Esophagus squamous epithelium (tissue), 5 donors: ENCODE measurements at regions of chr4 and their contacts with region 1.

Region 1: DNA sequence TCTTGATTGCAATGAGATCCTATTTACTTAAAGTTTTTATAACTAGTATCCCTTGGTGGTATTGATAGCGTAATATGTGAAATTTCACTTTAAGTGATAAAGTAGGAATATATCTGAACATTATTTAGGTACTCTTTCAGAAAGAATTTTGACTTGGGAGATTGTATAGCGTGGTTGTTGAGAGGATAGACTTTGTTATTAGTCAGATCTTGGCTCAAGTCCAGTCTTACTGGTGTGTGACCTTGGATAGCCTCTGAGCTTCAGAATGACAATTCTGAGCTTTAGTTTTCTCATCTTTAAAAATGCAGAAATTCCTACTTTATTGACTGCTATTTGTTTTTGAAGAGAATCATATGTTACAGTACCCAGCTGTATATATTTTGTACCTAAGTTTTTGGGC is 32.6 kb downstream of the DCK start:
- DNase-seq: no peak
- H3K4me3 ChIP-seq: no peak overlapping the region
- H3K27ac ChIP-seq: no peak overlapping the region
- H3K4me1 ChIP-seq: peaks cover 0 to 16% (median 0%) of the 10 kb centered on the region in 3 donors
- H3K27me3 ChIP-seq: no peaks in the 10 kb centered on the region
- CTCF ChIP-seq: no peak
- POLR2A ChIP-seq: no peak

Region 2: GRCh38 chr4:70651864-70652506 is 374.1 kb before region 1 on chr4:
- intact Hi-C with region 1: loop called (anchors 10 kb)
- DNase-seq: no peak
- H3K4me3 ChIP-seq: peak overlapping the region in 1 of 4 donors; percentile 26
- H3K27ac ChIP-seq: no peak overlapping the region
- H3K4me1 ChIP-seq: no peaks in the 10 kb centered on the region
- H3K27me3 ChIP-seq: no peaks in the 10 kb centered on the region
- CTCF ChIP-seq: peak; percentile 15 to 69 (median 58)
- POLR2A ChIP-seq: no peak

Region 3: GRCh38 chr4:70783096-70783495 is 243.0 kb before region 1 on chr4:
- intact Hi-C with region 1: no loop called
- DNase-seq: no peak
- H3K4me3 ChIP-seq: no peak overlapping the region
- H3K27ac ChIP-seq: no peak overlapping the region
- H3K4me1 ChIP-seq: peaks cover 0 to 7% (median 0%) of the 10 kb centered on the region in 3 donors
- H3K27me3 ChIP-seq: no peaks in the 10 kb centered on the region
- CTCF ChIP-seq: no peak
- POLR2A ChIP-seq: no peak

Region 4: GRCh38 chr4:70849291-70849690 is 176.8 kb before region 1 on chr4:
- intact Hi-C with region 1: no loop called
- DNase-seq: no peak
- H3K4me3 ChIP-seq: no peak overlapping the region
- H3K27ac ChIP-seq: no peak overlapping the region
- H3K4me1 ChIP-seq: no peaks in the 10 kb centered on the region
- H3K27me3 ChIP-seq: no peaks in the 10 kb centered on the region
- CTCF ChIP-seq: no peak
- POLR2A ChIP-seq: no peak

Region 5: DNA sequence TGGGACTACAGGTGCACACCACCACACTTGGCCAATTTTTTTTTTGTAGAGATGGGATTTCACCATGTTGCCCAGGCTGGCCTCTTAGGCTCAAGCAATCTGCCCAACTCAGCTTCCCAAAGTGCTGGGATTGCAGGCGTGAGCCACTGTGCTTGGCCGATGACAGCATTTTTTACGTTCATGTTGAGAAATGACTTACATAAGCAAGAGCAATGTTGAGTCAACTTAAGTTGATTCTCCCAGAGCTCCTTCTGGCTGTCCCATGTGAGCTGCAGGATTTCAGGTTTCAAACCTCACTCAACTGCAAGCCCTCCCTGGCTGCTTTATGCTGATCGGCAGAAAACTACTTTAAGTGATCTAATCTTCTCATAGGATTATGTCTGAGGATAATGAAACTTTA is 670.9 kb after region 1 on chr4:
- intact Hi-C with region 1: no loop called
- DNase-seq: no peak
- H3K4me3 ChIP-seq: no peak overlapping the region
- H3K27ac ChIP-seq: no peak overlapping the region
- H3K4me1 ChIP-seq: no peaks in the 10 kb centered on the region
- H3K27me3 ChIP-seq: no peaks in the 10 kb centered on the region
- CTCF ChIP-seq: no peak
- POLR2A ChIP-seq: no peak